IMR-90 (cell line): ENCODE measurements at regions of chr17 and their contacts with region 1.

Region 1: DNA sequence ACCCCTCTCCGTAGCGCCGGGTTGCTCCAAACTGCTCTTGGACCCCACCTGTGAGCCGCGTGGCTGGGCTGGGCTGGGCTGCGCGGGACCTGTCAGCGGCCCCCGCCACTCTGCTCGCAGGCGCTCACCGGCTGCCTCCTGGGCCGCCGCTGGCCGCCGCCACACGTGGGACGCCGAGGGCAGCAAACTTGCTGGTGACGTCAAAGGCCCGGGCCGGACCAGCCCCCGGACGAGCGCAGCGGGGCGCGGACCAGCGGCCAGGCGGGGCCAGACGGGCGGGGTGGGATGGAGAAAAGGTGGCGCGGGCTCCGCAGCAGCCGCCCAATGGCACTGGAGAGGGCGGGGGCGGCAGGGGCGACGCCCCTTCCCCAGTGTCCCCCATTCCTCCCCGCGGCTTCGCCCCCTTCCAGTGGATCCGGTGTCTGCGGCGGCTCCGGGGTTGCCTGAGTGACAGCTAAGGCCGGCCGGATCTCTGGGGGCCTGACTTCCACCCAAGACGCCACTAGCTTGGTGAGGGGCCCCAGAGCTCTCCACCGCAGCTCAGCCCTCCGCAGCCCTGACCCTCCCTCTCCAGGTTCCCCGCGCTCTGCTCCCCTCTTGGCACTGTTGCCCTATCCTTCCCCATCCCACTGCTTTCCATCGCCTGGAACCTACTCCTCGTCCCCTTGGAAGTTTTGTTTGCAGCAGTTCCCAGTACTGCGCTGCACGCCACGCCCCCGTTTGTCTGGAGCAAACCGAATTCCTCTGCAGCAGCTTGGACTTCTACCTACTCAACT is at the start of gene HS3ST3A1:
- DNase-seq: peak; percentile 82
- ATAC-seq: peak; percentile 85
- H3K4me3 ChIP-seq: peak within 1 kb of the TSS; percentile 93
- H3K27ac ChIP-seq: peak within 1 kb of the TSS; percentile 98
- H3K4me1 ChIP-seq: no peaks in the 10 kb centered on the region
- H3K27me3 ChIP-seq: no peaks in the 10 kb centered on the region
- CTCF ChIP-seq: no peak
- POLR2A ChIP-seq: peak; percentile 73
- RAD21 ChIP-seq: peak; percentile 10; the same call in 1 of the 2 replicates
- total RNA-seq, gene HS3ST3A1: 7.5 and 9.0 TPM in 2 replicates

Region 2: GRCh38 chr17:13785981-13786598 is 184.1 kb after region 1 on chr17:
- CTCF ChIA-PET with region 1: no interaction called
- POLR2A ChIA-PET with region 1: no interaction called
- dilution Hi-C with region 1: no loop called
- in situ Hi-C with region 1: no loop called
- intact Hi-C with region 1: loop called (anchors 5 kb)
- DNase-seq: peak; percentile 76
- ATAC-seq: peak; percentile 86
- H3K4me3 ChIP-seq: no peak overlapping the region
- H3K27ac ChIP-seq: peak overlapping the region; percentile 18; the same call in 1 of the 2 replicates
- H3K4me1 ChIP-seq: peaks cover 7% of the 10 kb centered on the region
- H3K27me3 ChIP-seq: peaks cover 2% of the 10 kb centered on the region; the same call in 1 of the 2 replicates
- CTCF ChIP-seq: no peak
- POLR2A ChIP-seq: no peak
- RAD21 ChIP-seq: no peak

Region 3: DNA sequence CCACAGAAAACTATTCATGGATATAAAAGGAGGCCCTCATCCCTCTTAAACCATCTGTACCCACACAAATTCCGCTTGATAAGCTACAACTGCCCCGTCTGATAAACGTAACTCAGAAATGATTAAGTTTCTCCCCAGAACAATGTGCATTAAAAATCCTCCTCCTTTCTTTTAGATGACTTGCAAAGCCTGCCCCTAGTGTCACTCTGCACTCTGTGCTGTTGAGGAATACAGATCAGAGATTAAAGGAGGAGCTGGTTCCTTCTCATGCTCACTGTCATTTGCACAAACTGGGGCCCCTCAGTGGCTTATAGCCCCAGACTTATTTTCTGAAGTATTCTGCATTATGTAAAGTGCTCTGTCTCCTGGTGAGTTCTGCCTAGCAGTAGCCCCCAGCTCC is 601.4 kb after region 1 on chr17:
- CTCF ChIA-PET with region 1: no interaction called
- POLR2A ChIA-PET with region 1: no interaction called
- dilution Hi-C with region 1: no loop called
- in situ Hi-C with region 1: no loop called
- intact Hi-C with region 1: loop called (anchors 5 kb)
- DNase-seq: peak; percentile 8
- ATAC-seq: peak; percentile 42; the same call in 1 of the 2 replicates
- H3K4me3 ChIP-seq: no peak overlapping the region
- H3K27ac ChIP-seq: no peak overlapping the region
- H3K4me1 ChIP-seq: no peaks in the 10 kb centered on the region
- H3K27me3 ChIP-seq: no peaks in the 10 kb centered on the region
- CTCF ChIP-seq: 0 out of 2 replicates have a peak, but pooled peaks have one; percentile 22
- POLR2A ChIP-seq: no peak
- RAD21 ChIP-seq: no peak